HCT116 (cell line): ENCODE measurements at regions of chr12 and their contacts with region 1.

Region 1: GRCh38 chr12:65430571-65431306 is 152.3 kb downstream of the MSRB3 start:
- DNase-seq: peak; percentile 88
- ATAC-seq: peak; percentile 79
- H3K4me3 ChIP-seq: no peak overlapping the region
- H3K27ac ChIP-seq: peak overlapping the region; percentile 96
- H3K4me1 ChIP-seq: peaks cover 78 to 97% of the 10 kb centered on the region in 2 experiments
- H3K27me3 ChIP-seq: no peaks in the 10 kb centered on the region
- CTCF ChIP-seq: no peak
- POLR2A ChIP-seq: no peak
- RAD21 ChIP-seq: peak; percentile 46

Region 2: DNA sequence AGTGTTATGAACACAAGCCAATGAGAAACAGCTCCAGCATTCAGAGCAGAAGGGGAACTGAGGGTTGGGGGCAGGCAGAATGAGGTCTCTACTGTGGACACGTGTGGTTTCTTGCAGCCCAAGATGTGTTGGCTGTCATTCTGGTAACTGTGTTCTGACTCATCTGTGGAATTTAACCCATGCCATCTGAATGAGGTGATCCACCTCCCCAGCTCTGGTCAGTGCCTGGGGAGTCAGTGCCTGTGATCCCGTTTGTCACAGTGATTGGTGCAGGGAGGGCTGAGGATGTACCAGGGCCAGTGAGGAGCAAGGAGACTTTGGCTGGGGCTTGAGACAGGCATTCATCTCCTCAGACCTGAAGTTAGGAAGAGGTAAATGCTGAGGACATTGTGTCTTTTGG is 64.5 kb after region 1 on chr12:
- CTCF ChIA-PET with region 1: interaction called, 3 read pairs
- POLR2A ChIA-PET with region 1: interaction called, 10 read pairs
- RAD21 ChIA-PET with region 1: no interaction called
- intact Hi-C with region 1: loop called (anchors 5 kb)
- DNase-seq: peak; percentile 88
- ATAC-seq: peak; percentile 86
- H3K4me3 ChIP-seq: no peak overlapping the region
- H3K27ac ChIP-seq: peak overlapping the region; percentile 87
- H3K4me1 ChIP-seq: peaks cover 84 to 86% of the 10 kb centered on the region in 2 experiments
- H3K27me3 ChIP-seq: no peaks in the 10 kb centered on the region
- CTCF ChIP-seq: no peak
- POLR2A ChIP-seq: peak; percentile 35
- RAD21 ChIP-seq: no peak

Region 3: GRCh38 chr12:65830305-65830704 is 399.6 kb after region 1 on chr12:
- CTCF ChIA-PET with region 1: no interaction called
- POLR2A ChIA-PET with region 1: no interaction called
- RAD21 ChIA-PET with region 1: no interaction called
- intact Hi-C with region 1: loop called (anchors 10 kb)
- DNase-seq: no peak
- ATAC-seq: no peak
- H3K4me3 ChIP-seq: peak overlapping the region in 1 of 2 experiments; percentile 85; a peak in 2 of 4 replicates
- H3K27ac ChIP-seq: peak overlapping the region; percentile 100; the same call in 1 of the 2 replicates
- H3K4me1 ChIP-seq: peaks cover 77 to 87% of the 10 kb centered on the region in 2 experiments
- H3K27me3 ChIP-seq: no peaks in the 10 kb centered on the region
- CTCF ChIP-seq: no peak
- POLR2A ChIP-seq: no peak
- RAD21 ChIP-seq: no peak